Posterior vena cava (tissue), 2 donors: ENCODE measurements at regions of chr4 and their contacts with region 1.

Region 1: DNA sequence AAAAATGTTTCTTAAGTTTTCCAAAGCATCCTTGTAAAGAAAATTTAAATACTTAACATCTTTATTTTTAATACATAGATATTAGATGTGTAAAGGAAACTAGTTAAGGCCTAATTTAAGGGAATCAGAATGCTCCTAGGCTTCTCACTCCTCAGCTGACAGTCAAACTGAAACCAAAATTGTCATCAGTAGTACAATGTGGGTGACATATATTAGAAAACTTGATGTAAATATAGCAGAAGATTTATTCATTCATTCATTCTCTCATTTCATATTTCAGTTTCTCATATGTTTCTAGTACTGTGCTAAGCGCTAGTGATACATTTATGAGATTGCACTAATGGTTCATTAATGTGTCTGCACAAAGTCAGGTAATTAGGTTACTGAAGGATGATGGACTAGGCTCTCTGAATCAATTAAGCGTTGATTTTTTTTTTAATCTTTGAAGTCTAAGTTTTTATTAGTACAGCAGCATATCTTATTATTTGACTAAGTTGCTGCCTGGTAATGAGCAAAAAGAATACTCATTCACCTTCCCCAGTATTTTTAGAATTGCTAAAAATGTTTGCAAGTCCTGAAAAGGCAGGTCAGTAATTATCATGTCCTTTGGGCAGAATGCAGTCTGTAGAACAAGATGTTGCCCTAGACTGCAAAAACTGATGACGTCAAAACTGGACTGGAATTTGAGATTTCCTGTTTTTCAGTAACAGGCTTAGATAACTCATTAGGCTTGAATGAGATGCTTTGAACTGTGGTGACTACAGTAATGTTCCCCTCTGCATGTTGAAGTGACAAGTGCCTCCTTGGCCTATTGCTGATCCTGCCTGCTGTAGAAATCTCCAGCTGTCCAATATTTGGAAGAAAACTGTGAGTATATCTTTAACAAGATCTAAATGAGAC is 128.7 kb downstream of the ARHGAP24 start:
- DNase-seq: no peak

Region 2: GRCh38 chr4:85591406-85592098 is 12.1 kb before region 1 on chr4:
- intact Hi-C with region 1: loop called in 1 of 2 experiments (anchors 1 kb)
- DNase-seq: no peak